A549 (cell line): ENCODE measurements at regions of chr11 and their contacts with region 1.

Region 1: DNA sequence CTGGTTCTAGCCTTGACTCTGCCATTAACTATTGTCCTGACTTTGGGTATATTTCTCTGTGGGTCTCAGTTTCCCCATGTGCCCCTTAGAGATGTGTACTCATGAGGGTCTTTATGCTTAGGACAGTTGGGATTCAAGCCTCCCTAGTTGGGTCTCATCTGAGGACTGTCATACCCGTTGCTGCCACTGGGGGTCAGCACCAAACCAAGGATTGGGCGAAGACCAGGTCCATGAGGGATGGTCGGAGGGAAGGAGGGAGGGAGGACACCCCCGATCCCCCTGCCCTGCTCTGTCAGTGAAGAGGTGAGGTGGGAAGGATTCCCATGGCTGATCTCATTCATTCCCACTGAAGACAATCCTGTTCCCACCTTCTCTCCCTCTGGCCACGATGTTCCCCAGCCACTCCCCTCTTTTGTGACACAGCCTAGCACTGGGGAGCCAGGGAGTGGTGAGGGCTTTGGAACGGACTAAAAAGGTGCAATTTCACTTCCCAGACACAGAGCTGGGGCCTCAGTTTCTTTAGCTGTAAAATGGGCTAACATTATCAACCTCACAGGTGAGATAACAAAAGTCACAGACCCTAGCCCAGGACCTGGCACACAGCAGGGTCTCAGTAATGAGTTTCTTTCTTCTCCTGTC is 12.4 kb upstream of the KLHL35 start:
- DNase-seq: peak; percentile 52 to 83
- ATAC-seq: peak; percentile 68 to 89
- H3K4me3 ChIP-seq: no peak overlapping the region
- H3K27ac ChIP-seq: no peak overlapping the region
- H3K4me1 ChIP-seq: no peaks in the 10 kb centered on the region
- CTCF ChIP-seq: peak; percentile 94
- EP300 ChIP-seq: no peak
- POLR2A ChIP-seq: no peak
- RAD21 ChIP-seq: peak; percentile 99

Region 2: GRCh38 chr11:75087319-75088305 is 357.8 kb before region 1 on chr11:
- CTCF ChIA-PET with region 1: no interaction called
- POLR2A ChIA-PET with region 1: no interaction called
- DNase-seq: no peak
- ATAC-seq: no peak
- H3K4me3 ChIP-seq: no peak overlapping the region
- H3K27ac ChIP-seq: no peak overlapping the region
- H3K4me1 ChIP-seq: peaks cover 4% of the 10 kb centered on the region; the same call in 1 of the 3 replicates
- CTCF ChIP-seq: no peak
- EP300 ChIP-seq: no peak
- POLR2A ChIP-seq: no peak
- RAD21 ChIP-seq: no peak

Region 3: DNA sequence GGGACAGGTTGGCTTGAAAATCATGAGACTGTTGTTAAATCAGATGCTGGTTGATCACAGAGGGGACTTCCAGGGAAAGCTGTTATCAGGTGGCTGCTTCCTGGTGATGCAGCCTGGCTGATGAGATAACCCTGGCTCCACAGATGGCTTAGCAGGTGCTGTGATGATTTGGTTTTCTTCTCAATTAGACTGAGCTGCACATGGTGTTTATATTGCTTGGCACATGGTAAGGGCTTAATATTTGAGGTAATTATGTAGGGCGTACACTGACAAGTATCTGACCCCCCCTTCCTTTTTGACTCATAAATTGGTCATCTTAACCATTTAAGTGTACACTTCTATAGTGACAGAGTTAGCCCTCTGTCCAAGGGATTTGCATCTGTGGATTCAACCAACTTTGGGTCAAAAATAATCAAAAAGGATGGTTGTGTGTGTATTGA is 39.1 kb before region 1 on chr11:
- CTCF ChIA-PET with region 1: interaction called, 12 read pairs
- POLR2A ChIA-PET with region 1: no interaction called
- DNase-seq: no peak
- ATAC-seq: no peak
- H3K4me3 ChIP-seq: no peak overlapping the region
- H3K27ac ChIP-seq: no peak overlapping the region
- H3K4me1 ChIP-seq: peaks cover 49% of the 10 kb centered on the region
- CTCF ChIP-seq: no peak
- EP300 ChIP-seq: no peak
- POLR2A ChIP-seq: no peak
- RAD21 ChIP-seq: no peak

Region 4: DNA sequence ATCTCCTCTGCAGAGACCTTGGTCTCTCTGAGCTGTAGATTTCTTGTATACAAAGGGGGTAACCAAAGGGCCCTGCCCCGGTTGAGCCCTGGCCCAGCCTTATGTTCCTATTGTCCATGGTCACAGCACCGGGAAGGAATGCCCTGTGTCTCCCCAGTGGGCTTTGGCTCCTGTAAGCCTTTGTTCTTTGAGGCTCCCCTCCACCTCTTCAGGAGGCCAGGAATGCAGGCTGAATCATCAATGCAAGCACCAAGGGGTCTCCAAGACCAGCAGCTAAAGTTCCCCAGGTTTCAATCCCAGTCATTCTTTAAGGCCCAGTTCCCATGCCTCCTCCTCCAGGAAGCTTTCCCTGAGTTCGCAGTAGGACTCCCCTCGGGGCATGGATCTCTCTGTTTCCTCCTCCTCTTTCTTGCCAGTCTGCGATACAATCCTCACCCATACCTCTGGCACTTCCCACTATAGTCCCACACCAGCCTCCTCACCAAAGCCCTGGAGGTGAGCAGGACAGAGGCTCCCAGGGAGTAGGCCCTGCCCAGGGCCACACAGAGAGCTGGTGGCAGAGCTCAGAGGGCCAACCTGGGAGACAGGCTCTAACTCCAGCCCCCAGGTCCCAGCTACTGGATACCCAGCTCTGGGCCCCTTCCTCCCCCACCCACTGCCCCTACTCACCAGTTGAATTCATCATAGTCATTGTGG is 16.8 kb after region 1 on chr11:
- CTCF ChIA-PET with region 1: interaction called, 59 read pairs
- POLR2A ChIA-PET with region 1: no interaction called
- DNase-seq: no peak
- ATAC-seq: peak in 1 of 2 experiments; percentile 16; a peak in 1 of 6 replicates
- H3K4me3 ChIP-seq: no peak overlapping the region
- H3K27ac ChIP-seq: 0 out of 6 replicates have a peak overlapping the region, but pooled peaks of 1 of the 2 experiments have one; percentile 19
- H3K4me1 ChIP-seq: no peaks in the 10 kb centered on the region
- CTCF ChIP-seq: no peak
- EP300 ChIP-seq: no peak
- POLR2A ChIP-seq: no peak
- RAD21 ChIP-seq: no peak

Region 5: DNA sequence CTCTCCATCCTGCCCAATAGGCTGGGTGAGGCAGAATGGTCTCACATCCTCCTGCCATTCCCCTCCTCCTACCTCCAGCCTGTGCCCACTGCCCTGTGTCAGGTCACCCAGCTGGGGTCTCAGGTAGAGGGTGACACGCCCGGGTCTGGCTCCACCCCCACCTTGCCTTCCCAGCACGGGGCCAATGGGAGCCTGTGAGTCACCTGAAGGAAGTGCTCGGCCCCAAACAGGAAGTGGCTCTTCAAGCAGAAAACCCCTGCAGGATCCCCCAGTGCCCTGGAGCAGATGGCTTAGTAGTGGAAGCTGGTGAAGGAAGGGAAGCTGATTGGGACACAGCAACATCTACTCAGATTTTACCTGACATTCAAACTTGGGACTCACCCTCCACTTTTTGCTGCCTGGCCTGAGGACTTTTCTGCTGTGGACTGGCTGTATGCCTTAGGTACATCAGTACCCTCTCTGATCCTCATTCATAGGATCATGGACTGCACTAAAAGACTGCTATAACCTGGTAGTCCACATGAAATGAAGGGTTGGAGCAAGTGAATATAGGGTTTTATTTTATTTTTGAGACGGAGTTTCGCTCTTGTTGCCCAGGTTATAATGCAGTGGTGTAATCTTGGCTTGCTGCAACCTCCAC is 46.9 kb after region 1 on chr11:
- CTCF ChIA-PET with region 1: interaction called, 17 read pairs
- POLR2A ChIA-PET with region 1: no interaction called
- DNase-seq: no peak
- ATAC-seq: peak; percentile 33 to 49; a peak in 3 of 6 replicates
- H3K4me3 ChIP-seq: no peak overlapping the region
- H3K27ac ChIP-seq: peak overlapping the region in 1 of 2 experiments; percentile 69; a peak in 3 of 6 replicates
- H3K4me1 ChIP-seq: peaks cover 34% of the 10 kb centered on the region
- CTCF ChIP-seq: no peak
- EP300 ChIP-seq: no peak
- POLR2A ChIP-seq: no peak
- RAD21 ChIP-seq: no peak

Region 6: GRCh38 chr11:75525596-75526541 is 80.4 kb after region 1 on chr11 and contains the start of gene GDPD5:
- CTCF ChIA-PET with region 1: interaction called, 432 read pairs
- POLR2A ChIA-PET with region 1: no interaction called
- DNase-seq: peak; percentile 76 to 89
- ATAC-seq: peak; percentile 81 to 90
- H3K4me3 ChIP-seq: peak within 1 kb of the TSS; percentile 91
- H3K27ac ChIP-seq: peak within 1 kb of the TSS; percentile 95
- H3K4me1 ChIP-seq: peaks cover 16% of the 10 kb centered on the region
- CTCF ChIP-seq: peak; percentile 83
- EP300 ChIP-seq: no peak
- POLR2A ChIP-seq: peak; percentile 37
- RAD21 ChIP-seq: peak; percentile 27 to 76; a peak in 3 of 5 replicates
- polyA plus RNA-seq, gene GDPD5: 3.9 and 4.7 TPM in 2 replicates